CD8-positive, alpha-beta memory T cell (primary cell): ENCODE measurements at regions of chrX and their contacts with region 1.

Region 1: DNA sequence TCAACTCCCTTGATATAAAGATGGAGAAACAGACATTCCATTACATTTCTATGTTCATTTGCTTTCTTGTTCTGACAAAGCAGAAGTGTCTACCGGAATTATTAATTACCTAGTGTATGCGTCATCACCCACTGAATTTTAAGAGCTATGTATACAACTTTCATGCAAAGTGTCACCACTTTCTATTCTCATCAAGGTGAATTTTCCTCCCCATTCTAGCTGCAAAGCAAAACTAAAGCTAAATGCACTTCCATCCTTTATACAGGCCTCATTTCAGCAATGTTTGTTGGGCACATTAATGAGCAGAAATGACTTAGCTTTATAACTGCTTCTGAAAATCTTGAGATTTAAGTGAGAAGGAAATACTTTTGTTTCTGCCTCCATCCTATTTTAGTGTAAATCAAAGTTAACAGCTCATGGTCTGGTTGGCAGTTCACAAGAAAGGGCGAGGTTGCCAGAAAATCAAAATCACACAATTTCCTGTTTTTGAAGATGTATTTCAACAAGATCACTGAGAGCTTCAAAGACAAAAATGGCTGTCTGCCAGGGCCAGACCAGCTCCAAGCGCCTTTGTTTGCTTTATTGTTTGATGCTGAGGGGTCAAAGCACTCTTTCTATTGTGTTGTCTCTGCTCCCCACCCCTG is 7.2 kb upstream of the FAM9C start:
- DNase-seq: peak in 3 of 5 donors; percentile 46 to 78 (median 58)
- H3K4me3 ChIP-seq: no peak overlapping the region
- H3K4me3 Mint-ChIP-seq: peak overlapping the region; percentile 8 to 69 (median 51)
- H3K27ac ChIP-seq: peak overlapping the region; percentile 21
- H3K27ac Mint-ChIP-seq: peak overlapping the region; percentile 61 to 97 (median 90)
- H3K4me1 ChIP-seq: peaks cover 84% of the 10 kb centered on the region
- H3K4me1 Mint-ChIP-seq: peaks cover 61 to 84% (median 83%) of the 10 kb centered on the region in 3 donors
- H3K27me3 ChIP-seq: no peaks in the 10 kb centered on the region
- H3K27me3 Mint-ChIP-seq: peaks cover 0 to 7% of the 10 kb centered on the region in 2 donors

Region 2: GRCh38 chrX:13081395-13082205 is 29.9 kb after region 1 on chrX:
- CTCF ChIA-PET with region 1: interaction called, 21 read pairs
- POLR2A ChIA-PET with region 1: interaction called, 16 read pairs
- DNase-seq: peak in 2 of 5 donors; percentile 47
- H3K4me3 ChIP-seq: peak overlapping the region; percentile 5
- H3K4me3 Mint-ChIP-seq: peak overlapping the region; percentile 46 to 74 (median 68)
- H3K27ac ChIP-seq: no peak overlapping the region
- H3K27ac Mint-ChIP-seq: peak overlapping the region; percentile 88 to 98 (median 92)
- H3K4me1 ChIP-seq: peaks cover 98% of the 10 kb centered on the region
- H3K4me1 Mint-ChIP-seq: peaks cover 78 to 95% (median 94%) of the 10 kb centered on the region in 3 donors
- H3K27me3 ChIP-seq: no peaks in the 10 kb centered on the region
- H3K27me3 Mint-ChIP-seq: peaks cover 0 to 28% of the 10 kb centered on the region in 2 donors